ENCODE measurements at regions of chr4 and their contacts with region 1.

Region 1: GRCh38 chr4:107930821-107931774 is at the start of gene CYP2U1:
- DNase-seq: peak; percentile 85 to 90
- ATAC-seq: peak; percentile 97
- total RNA-seq, gene CYP2U1: 2.8 to 4.0 TPM

Region 2: GRCh38 chr4:107989537-107990386 is 58.7 kb after region 1 on chr4 and contains the start of gene HADH:
- intact Hi-C with region 1: loop called in 1 of 2 experiments (anchors 5 kb)
- DNase-seq: peak; percentile 92 to 96
- ATAC-seq: peak; percentile 92
- total RNA-seq, gene HADH: 145 to 147 TPM

Region 3: GRCh38 chr4:108224611-108225053 is 293.5 kb after region 1 on chr4:
- intact Hi-C with region 1: no loop called
- DNase-seq: peak in 1 of 2 donors; percentile 6
- ATAC-seq: no peak

Measured in left colon (tissue), 2 donors.